Posterior cingulate gyrus (tissue), 11 donors: ENCODE measurements at regions of chr2 and their contacts with region 1.

Region 1: DNA sequence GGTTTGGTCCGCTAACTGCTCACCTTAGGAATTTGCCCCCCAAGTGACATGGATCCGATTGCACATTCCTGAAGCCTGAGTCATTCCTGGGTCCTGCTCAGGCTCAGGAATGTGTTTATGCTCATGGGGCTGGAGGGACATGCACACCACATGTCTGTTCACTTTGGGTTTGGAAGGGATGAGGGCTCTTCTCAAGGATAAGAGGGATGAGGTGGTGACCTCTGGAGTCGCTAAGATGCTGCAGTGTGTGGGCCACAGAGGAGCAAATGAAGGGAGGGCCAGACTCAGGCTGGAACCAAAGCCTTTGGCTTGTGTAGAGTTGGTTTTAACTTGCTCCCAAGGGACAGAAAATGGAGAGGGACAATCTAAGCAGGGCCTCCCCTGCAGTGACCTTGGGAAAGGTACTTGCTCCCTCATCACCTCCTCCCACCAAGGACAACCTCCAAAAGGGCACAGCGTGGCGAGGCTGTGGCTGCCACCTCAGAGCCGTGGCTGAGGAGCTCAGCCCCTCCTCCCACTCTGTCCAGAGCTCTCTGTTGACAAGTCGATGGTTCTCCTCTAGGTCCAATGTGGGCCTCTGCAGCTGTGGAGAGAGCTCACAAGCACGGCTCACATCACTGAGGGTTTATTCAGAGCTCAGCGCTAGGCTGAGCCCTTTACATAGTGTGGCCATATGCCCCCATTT is 66.1 kb downstream of the HS1BP3 start:
- DNase-seq: peak in 8 of 10 donors; percentile 45 to 95 (median 64)

Region 2: DNA sequence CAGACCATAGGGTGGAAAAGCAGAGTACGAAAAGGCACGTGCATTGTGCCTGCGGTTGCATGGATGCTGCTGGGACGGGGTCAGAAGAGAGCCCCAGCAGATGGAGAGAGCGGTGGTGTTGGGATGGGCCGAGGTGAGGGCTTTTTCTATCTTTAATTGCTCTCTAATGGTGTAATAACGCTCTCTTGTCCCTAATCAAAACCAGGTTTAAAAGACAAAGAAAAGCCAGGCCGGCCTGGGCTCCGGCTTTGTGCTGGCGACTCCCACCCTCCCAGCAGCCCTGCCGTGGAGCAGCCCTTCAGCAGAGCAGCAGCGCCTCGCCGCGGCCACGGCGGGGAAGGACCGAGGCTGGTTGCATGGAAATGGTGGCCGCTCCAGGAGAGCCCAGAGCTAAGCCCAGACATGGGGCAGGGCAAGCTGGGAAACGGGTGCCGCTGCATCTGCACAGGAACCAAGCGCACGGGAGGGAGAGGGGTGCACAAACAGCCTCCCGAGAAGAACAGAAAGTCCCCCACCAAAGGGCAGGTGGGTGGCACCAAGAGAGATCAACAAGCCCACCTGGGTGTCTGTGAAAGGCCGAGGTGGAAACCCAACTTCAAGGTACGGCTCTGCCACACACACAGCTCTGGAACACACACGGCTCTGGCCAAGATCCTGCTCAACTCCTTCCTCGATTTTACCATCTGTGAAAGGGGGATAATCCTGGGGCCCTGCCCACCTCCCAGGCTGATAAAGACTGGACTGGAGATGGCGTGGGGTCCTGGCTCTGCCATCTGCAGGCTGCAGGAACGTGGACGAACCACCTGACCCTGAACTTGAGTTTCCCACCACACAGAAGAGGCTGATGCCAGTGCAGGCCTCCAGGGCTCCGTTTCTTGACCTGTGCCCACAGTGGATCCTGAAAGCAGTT is 51.2 kb after region 1 on chr2:
- intact Hi-C with region 1: loop called (anchors 5 kb)
- DNase-seq: peak; percentile 81 to 99 (median 92)